BJ (cell line): ENCODE measurements at regions of chr12 and their contacts with region 1.

Region 1: DNA sequence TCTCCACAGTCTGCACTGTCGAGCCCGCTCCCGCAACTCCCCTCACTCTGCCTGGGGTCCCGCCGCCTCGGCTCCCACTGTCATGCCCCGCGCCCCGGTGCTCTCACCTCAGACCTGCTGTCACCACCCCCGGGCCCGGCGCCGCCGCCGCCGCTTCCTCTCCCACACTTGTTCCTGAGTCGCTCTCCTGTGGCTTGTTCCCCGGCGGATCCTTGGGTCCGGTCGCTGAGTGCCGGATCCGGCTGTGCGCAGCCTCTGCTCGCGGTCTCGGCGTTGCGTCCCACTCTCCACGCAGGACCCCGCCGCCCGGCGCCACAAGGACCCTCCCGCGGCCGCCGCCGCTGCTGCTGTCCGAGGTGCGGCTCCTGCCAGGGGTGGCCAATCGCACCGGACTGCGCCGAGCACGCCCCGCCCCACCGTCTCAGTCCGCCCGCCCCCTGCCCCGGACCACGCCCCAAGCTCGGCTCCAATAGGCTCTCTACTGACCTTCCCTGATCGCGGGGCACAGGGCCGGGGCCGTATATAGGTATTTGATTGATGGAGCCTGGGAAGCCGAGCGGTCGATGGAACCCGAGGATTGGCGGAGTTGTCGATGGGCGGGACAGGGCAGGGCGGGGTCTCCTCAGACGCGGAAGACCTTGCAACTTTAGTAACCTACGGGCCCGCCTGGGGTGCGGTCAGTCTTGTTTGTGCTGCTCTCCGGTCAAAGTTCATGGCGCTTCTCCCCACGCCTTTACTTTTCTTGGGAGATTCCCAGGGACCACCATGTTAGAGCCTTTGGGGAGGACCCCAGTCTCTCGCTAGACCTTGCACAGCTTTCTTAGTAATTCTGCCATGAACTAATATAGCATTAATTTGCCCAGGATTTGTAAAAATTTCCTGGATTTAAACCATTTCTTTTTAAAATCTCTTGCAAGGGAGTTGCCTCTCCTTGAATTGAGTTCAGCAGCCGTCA is at the start of gene TAOK3:
- DNase-seq: peak; percentile 84
- H3K4me3 ChIP-seq: peak within 1 kb of the TSS; percentile 93
- H3K27me3 ChIP-seq: no peaks in the 10 kb centered on the region
- CTCF ChIP-seq: no peak
- polyA plus RNA-seq, gene TAOK3: 18.3 and 23.5 TPM in 2 replicates

Region 2: DNA sequence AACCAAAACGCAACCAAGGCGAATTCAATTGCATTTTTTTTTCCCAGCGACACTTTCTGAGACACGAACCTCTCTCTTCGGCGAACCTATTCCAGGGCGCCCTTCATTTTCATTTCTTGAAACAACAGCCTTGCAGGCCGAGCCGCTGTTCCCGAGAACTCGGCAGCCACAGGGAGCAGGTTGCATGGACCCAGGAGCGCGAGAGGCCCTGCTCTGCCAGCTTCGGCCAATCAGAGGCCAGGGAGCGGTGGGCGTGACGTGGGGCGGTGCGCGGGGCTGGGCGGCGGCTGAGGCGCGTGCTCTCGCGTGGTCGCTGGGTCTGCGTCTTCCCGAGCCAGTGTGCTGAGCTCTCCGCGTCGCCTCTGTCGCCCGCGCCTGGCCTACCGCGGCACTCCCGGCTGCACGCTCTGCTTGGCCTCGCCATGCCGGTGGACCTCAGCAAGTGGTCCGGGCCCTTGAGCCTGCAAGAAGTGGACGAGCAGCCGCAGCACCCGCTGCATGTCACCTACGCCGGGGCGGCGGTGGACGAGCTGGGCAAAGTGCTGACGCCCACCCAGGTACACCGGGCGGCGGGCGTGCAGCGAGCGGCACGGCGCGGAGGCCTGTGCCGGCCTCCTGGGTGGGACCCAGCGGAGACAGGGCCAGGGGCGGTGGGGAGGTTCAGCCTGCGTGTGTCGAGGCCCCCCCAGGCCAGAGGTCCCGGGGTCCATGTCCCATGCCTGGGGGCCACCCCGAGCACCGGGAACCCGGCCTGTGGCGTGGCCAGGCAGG is 236.8 kb before region 1 on chr12 and contains the start of gene PEBP1:
- CTCF ChIA-PET with region 1: interaction called, 15 read pairs
- POLR2A ChIA-PET with region 1: no interaction called
- DNase-seq: peak; percentile 52
- H3K4me3 ChIP-seq: peak within 1 kb of the TSS; percentile 90
- H3K27me3 ChIP-seq: no peaks in the 10 kb centered on the region
- CTCF ChIP-seq: peak; percentile 8; the same call in 1 of the 2 replicates
- polyA plus RNA-seq, gene PEBP1: 145 and 201 TPM in 2 replicates

Region 3: GRCh38 chr12:118183705-118184104 is 189.1 kb before region 1 on chr12:
- CTCF ChIA-PET with region 1: interaction called, 226 read pairs
- POLR2A ChIA-PET with region 1: no interaction called
- DNase-seq: no peak
- H3K4me3 ChIP-seq: no peak overlapping the region
- H3K27me3 ChIP-seq: no peaks in the 10 kb centered on the region
- CTCF ChIP-seq: no peak

Region 4: GRCh38 chr12:118290130-118290529 is 82.7 kb before region 1 on chr12:
- CTCF ChIA-PET with region 1: interaction called, 13 read pairs
- POLR2A ChIA-PET with region 1: no interaction called
- DNase-seq: no peak
- H3K4me3 ChIP-seq: no peak overlapping the region
- H3K27me3 ChIP-seq: no peaks in the 10 kb centered on the region
- CTCF ChIP-seq: no peak

Region 5: DNA sequence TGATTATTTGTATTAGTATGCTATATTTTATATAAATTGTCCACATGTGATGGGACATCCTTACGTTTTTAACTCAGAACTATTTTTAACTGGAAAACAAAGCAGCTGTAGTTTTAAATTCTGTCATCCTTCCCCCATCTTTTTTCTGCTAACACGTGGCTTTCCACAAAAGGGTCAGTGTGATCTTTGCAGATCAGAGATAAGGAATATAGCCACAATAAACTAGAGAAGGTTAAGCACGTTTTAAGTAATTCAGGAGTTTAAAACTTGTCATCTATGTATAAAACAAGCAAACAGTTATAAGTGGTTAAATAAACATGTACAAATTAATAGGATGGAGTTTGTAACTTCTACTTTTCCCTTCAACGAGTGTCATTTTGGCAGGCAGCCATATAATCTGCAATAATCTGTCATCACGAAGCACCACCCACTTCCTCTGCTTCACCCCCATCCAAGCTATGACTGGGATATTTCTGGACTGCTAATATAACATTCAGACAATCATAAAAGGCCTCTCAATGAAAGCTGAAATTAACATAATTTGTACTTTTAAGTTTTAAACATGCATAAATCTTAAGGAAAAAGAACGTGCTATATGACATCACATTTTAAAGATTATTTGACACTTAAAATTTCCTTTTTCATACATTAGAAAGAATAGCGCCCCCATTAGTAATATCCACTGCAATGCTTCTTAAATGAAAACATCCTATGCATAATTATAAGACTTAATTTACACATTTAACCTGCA is 15.4 kb before region 1 on chr12:
- CTCF ChIA-PET with region 1: interaction called, 24 read pairs
- POLR2A ChIA-PET with region 1: interaction called, 14 read pairs
- DNase-seq: no peak
- H3K4me3 ChIP-seq: no peak overlapping the region
- H3K27me3 ChIP-seq: no peaks in the 10 kb centered on the region
- CTCF ChIP-seq: no peak

Region 6: GRCh38 chr12:118436002-118436730 is 63.3 kb after region 1 on chr12:
- CTCF ChIA-PET with region 1: no interaction called
- POLR2A ChIA-PET with region 1: no interaction called
- DNase-seq: no peak
- H3K4me3 ChIP-seq: no peak overlapping the region
- H3K27me3 ChIP-seq: no peaks in the 10 kb centered on the region
- CTCF ChIP-seq: 0 out of 2 replicates have a peak, but pooled peaks have one; percentile 13

Region 7: GRCh38 chr12:118689793-118690192 is 317.0 kb after region 1 on chr12:
- CTCF ChIA-PET with region 1: no interaction called
- POLR2A ChIA-PET with region 1: no interaction called
- DNase-seq: no peak
- H3K4me3 ChIP-seq: no peak overlapping the region
- H3K27me3 ChIP-seq: no peaks in the 10 kb centered on the region
- CTCF ChIP-seq: no peak

Region 8: DNA sequence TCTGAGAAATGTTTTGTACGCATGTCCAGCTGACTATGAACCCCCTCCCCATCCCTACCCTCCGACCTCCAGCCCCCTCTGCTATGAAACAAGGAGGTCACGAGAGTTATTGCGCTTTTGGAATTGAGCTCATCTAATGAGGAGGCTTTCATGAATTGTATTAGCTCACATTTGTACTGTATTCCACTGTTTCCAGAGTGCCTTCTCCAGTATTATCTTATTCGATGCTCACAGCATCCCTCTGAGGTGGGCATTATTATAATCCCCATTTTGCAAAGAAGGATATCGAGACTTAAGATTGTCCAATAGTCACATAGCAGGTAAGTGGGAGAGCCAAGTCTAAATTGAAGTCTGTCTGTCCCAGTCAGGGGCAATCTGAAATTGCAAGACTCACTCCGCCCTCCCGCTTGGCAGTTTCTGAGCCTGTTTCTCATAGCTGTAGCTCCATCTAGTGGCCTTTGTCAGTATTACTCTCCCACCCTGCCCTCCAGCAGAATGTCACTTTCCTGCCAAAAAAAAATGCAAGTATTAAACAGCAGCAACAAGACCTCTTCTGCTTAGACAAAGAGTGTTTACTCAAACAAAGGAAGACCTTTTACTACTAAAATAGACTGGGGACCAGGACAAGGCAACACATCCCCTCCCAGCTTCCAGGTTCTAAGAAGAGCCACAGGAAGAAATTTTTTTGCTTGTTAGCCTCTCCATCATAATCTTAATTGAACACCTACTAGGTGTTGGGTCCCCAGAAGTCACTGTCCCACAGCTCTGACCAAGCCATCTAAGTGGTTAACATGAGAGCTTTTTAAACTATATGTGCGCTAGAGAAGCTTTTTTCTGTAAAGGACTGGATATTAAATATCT is 1172.2 kb after region 1 on chr12:
- CTCF ChIA-PET with region 1: interaction called, 11 read pairs
- POLR2A ChIA-PET with region 1: no interaction called
- DNase-seq: peak; percentile 9
- H3K4me3 ChIP-seq: no peak overlapping the region
- H3K27me3 ChIP-seq: no peaks in the 10 kb centered on the region
- CTCF ChIP-seq: peak; percentile 81